Gastrocnemius medialis (tissue), 4 donors: ENCODE measurements at regions of chr12 and their contacts with region 1.

Region 1: DNA sequence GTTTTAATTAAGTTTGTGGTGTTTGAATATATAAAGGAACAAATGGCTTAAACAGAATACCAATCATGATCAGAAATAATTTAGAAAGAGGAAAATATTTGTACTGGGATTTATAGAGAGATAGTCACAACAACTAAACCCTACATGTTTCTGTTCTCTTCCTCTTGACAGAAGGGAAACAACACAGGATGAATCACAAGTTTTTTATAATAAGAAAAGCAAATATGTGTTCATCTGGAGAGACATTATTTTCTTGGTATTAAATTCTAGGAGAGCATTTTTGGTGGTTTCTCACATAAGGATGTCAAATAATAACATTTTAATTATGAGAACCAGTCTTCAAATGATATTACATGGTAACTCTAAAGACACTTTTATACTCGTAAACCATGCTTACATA is 232.9 kb upstream of the PKP2 start:
- DNase-seq: no peak
- ATAC-seq: no peak
- H3K4me3 ChIP-seq: no peak overlapping the region
- H3K27ac ChIP-seq: no peak overlapping the region
- H3K4me1 ChIP-seq: no peaks in the 10 kb centered on the region
- H3K27me3 ChIP-seq: no peaks in the 10 kb centered on the region
- CTCF ChIP-seq: no peak
- POLR2A ChIP-seq: no peak

Region 2: DNA sequence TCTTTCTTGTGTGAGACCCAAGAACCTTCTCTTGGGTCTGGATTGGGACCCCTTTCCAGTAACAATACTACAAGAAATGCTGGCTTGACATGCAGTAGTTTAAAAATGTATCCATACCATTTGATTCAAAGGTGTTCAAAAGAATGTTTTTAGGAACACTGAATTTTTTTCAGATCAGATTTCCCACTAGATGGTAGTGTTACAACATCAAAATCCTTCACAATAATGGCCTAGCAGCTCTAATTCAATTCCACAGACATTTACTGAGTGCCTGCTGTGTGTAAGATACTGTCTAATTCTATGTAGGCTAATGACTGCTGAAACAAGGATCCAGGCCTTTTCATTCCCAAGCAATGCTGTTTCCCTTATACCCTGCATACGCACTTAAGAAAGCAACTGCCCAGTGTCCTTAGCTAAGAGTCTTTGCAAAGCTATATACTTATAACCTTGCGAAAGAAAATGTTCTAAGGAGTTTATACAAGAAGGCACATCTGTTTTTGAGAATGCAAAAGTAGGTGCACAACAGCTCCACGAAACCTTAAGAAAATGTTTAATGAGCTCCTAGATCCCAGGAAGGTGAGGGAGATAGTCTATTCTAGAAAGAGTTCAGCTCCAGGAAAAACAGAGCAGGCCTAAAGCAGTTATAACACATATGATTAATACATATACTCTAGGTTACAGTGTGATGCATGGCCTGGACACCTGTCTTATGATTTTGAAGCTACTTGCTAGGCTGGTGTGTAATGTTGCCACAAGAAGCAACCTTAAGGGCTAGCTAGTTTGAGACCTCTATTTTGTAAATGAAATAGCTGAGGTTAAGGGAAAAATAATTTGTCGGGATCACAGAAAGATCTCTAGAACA is 182.1 kb before region 1 on chr12:
- in situ Hi-C with region 1: no loop called
- intact Hi-C with region 1: no loop called
- DNase-seq: no peak
- ATAC-seq: no peak
- H3K4me3 ChIP-seq: no peak overlapping the region
- H3K27ac ChIP-seq: no peak overlapping the region
- H3K4me1 ChIP-seq: no peaks in the 10 kb centered on the region
- H3K27me3 ChIP-seq: no peaks in the 10 kb centered on the region
- CTCF ChIP-seq: no peak
- POLR2A ChIP-seq: no peak

Region 3: GRCh38 chr12:33044447-33044846 is 85.1 kb before region 1 on chr12:
- in situ Hi-C with region 1: loop called in 1 of 4 experiments (anchors 25 kb)
- intact Hi-C with region 1: no loop called
- DNase-seq: no peak
- ATAC-seq: no peak
- H3K4me3 ChIP-seq: no peak overlapping the region
- H3K27ac ChIP-seq: no peak overlapping the region
- H3K4me1 ChIP-seq: no peaks in the 10 kb centered on the region
- H3K27me3 ChIP-seq: no peaks in the 10 kb centered on the region
- CTCF ChIP-seq: no peak
- POLR2A ChIP-seq: no peak

Region 4: GRCh38 chr12:33061844-33062243 is 67.7 kb before region 1 on chr12:
- in situ Hi-C with region 1: no loop called
- intact Hi-C with region 1: no loop called
- DNase-seq: no peak
- ATAC-seq: no peak
- H3K4me3 ChIP-seq: no peak overlapping the region
- H3K27ac ChIP-seq: no peak overlapping the region
- H3K4me1 ChIP-seq: no peaks in the 10 kb centered on the region
- H3K27me3 ChIP-seq: no peaks in the 10 kb centered on the region
- CTCF ChIP-seq: no peak
- POLR2A ChIP-seq: no peak